Activated naive CD4-positive, alpha-beta T cell treated with anti-CD3 and anti-CD28 coated beads, Interleukin-2, amount 10 ng/mL, durations not matched to agents 7 days and 5 days (primary cell): ENCODE measurements at regions of chr11 and their contacts with region 1.

Region 1: GRCh38 chr11:65817835-65818742 is 15.7 kb upstream of the SNX32 start:
- DNase-seq: peak; percentile 94
- H3K4me3 Mint-ChIP-seq: peak overlapping the region; percentile 73
- H3K27ac Mint-ChIP-seq: peak overlapping the region; percentile 84
- H3K4me1 Mint-ChIP-seq: peaks cover 23% of the 10 kb centered on the region
- H3K27me3 Mint-ChIP-seq: peaks cover 15% of the 10 kb centered on the region

Region 2: GRCh38 chr11:65662799-65663638 is 155.1 kb before region 1 on chr11 and contains the start of gene RELA:
- CTCF ChIA-PET with region 1: no interaction called
- DNase-seq: peak; percentile 91
- H3K4me3 Mint-ChIP-seq: peak within 1 kb of the TSS; percentile 87
- H3K27ac Mint-ChIP-seq: peak within 1 kb of the TSS; percentile 92
- H3K4me1 Mint-ChIP-seq: peaks cover 41% of the 10 kb centered on the region
- H3K27me3 Mint-ChIP-seq: no peaks in the 10 kb centered on the region

Region 3: DNA sequence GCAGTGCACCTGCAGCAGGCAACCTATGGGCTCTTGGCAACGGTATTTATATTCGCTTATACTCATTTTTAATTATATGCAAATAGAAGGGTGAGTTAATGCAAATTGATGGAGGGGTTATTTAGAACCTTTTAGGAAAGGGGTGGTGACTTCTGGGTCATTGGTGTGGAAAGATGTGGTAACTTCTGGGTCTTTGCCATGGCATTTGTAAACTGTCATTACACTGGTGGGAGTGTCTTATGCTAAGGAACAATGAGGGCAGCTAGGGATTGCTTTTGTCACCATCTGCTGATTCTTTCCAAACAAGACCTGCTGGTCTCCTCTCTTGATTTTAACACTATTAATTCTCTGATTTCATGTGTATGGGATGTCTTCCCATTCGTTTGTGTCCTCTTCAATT is 117.7 kb before region 1 on chr11:
- CTCF ChIA-PET with region 1: interaction called, 14 read pairs
- DNase-seq: no peak
- H3K4me3 Mint-ChIP-seq: no peak overlapping the region
- H3K27ac Mint-ChIP-seq: no peak overlapping the region
- H3K4me1 Mint-ChIP-seq: no peaks in the 10 kb centered on the region
- H3K27me3 Mint-ChIP-seq: peaks cover 50% of the 10 kb centered on the region

Region 4: GRCh38 chr11:65711785-65712632 is 106.1 kb before region 1 on chr11 and contains the start of gene KAT5:
- CTCF ChIA-PET with region 1: interaction called, 33 read pairs
- DNase-seq: peak; percentile 99
- H3K4me3 Mint-ChIP-seq: peak within 1 kb of the TSS; percentile 87
- H3K27ac Mint-ChIP-seq: peak within 1 kb of the TSS; percentile 98
- H3K4me1 Mint-ChIP-seq: peaks cover 38% of the 10 kb centered on the region
- H3K27me3 Mint-ChIP-seq: peaks cover 16% of the 10 kb centered on the region

Region 5: GRCh38 chr11:65720237-65720934 is 97.7 kb before region 1 on chr11 and contains the start of gene RNASEH2C:
- CTCF ChIA-PET with region 1: interaction called, 13 read pairs
- DNase-seq: peak; percentile 85
- H3K4me3 Mint-ChIP-seq: peak within 1 kb of the TSS; percentile 93
- H3K27ac Mint-ChIP-seq: peak within 1 kb of the TSS; percentile 87
- H3K4me1 Mint-ChIP-seq: peaks cover 40% of the 10 kb centered on the region
- H3K27me3 Mint-ChIP-seq: peaks cover 7% of the 10 kb centered on the region

Region 6: GRCh38 chr11:66112601-66113098 is 294.6 kb after region 1 on chr11:
- CTCF ChIA-PET with region 1: no interaction called
- DNase-seq: no peak
- H3K4me3 Mint-ChIP-seq: no peak overlapping the region
- H3K27ac Mint-ChIP-seq: peak overlapping the region; percentile 82
- H3K4me1 Mint-ChIP-seq: peaks cover 83% of the 10 kb centered on the region
- H3K27me3 Mint-ChIP-seq: no peaks in the 10 kb centered on the region